Activated CD4-positive, alpha-beta T cell treated with anti-CD3 and anti-CD28 coated beads, Interleukin-2, amount 10 ng/mL, durations not matched to agents 24 days and 14 days (primary cell): ENCODE measurements at regions of chr1 and their contacts with region 1.

Region 1: GRCh38 chr1:27392096-27392777 is at the start of gene GPR3:
- DNase-seq: peak; percentile 98
- H3K4me3 Mint-ChIP-seq: peak within 1 kb of the TSS; percentile 87
- H3K27ac Mint-ChIP-seq: peak within 1 kb of the TSS; percentile 93
- H3K4me1 Mint-ChIP-seq: peaks cover 13% of the 10 kb centered on the region
- H3K27me3 Mint-ChIP-seq: peaks cover 12% of the 10 kb centered on the region
- total RNA-seq, gene GPR3: 3.3 TPM in 2 replicates

Region 2: GRCh38 chr1:27300341-27301051 is 91.7 kb before region 1 on chr1:
- intact Hi-C with region 1: loop called (anchors 1 kb)
- DNase-seq: peak; percentile 92
- H3K4me3 Mint-ChIP-seq: no peak overlapping the region
- H3K27ac Mint-ChIP-seq: no peak overlapping the region
- H3K4me1 Mint-ChIP-seq: no peaks in the 10 kb centered on the region
- H3K27me3 Mint-ChIP-seq: no peaks in the 10 kb centered on the region

Region 3: DNA sequence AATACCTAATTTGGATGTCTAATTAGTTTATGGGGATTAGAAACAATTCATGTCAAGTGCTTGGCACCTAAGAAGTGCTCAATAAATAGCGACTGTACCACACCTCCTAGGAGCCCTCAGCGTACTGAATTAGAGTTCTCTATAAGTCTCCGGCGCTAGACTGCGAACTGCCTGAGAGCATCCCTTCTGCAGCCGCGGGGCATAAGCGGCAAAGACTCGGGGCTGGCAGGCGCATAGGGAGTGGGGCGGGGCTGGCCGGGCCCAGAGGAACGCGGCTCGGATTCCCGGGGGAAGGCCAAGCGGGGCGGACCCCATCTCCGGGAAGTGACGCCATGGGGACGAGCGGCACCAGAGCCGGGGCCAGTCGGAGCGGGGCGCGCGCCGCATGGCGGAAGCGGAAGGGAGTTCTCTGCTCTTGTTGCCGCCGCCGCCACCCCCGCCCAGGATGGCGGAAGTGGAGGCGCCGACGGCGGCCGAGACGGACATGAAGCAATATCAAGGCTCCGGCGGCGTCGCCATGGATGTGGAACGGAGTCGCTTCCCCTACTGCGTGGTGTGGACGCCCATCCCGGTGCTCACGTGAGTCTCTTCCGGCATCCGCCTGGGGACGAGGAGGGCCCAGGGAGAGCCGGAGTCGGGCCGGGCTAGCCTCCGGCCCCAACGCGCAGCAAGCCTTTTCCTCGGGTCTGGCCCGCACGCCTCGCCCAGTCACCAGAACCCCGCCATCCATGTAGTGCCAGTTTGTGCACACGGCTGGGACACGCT is 70.2 kb before region 1 on chr1 and contains the start of gene TMEM222:
- intact Hi-C with region 1: loop called (anchors 1 kb)
- DNase-seq: peak; percentile 99
- H3K4me3 Mint-ChIP-seq: peak within 1 kb of the TSS; percentile 97
- H3K27ac Mint-ChIP-seq: peak within 1 kb of the TSS; percentile 93
- H3K4me1 Mint-ChIP-seq: peaks cover 29% of the 10 kb centered on the region
- H3K27me3 Mint-ChIP-seq: peaks cover 5% of the 10 kb centered on the region
- total RNA-seq, gene TMEM222: 39.6 and 41.4 TPM in 2 replicates

Region 4: GRCh38 chr1:27332536-27333281 is 59.5 kb before region 1 on chr1:
- intact Hi-C with region 1: loop called (anchors 2 kb)
- DNase-seq: peak; percentile 85
- H3K4me3 Mint-ChIP-seq: no peak overlapping the region
- H3K27ac Mint-ChIP-seq: peak overlapping the region; percentile 60
- H3K4me1 Mint-ChIP-seq: peaks cover 28% of the 10 kb centered on the region
- H3K27me3 Mint-ChIP-seq: no peaks in the 10 kb centered on the region

Region 5: GRCh38 chr1:27346991-27347627 is 45.1 kb before region 1 on chr1:
- intact Hi-C with region 1: no loop called
- DNase-seq: no peak
- H3K4me3 Mint-ChIP-seq: no peak overlapping the region
- H3K27ac Mint-ChIP-seq: no peak overlapping the region
- H3K4me1 Mint-ChIP-seq: peaks cover 32% of the 10 kb centered on the region
- H3K27me3 Mint-ChIP-seq: no peaks in the 10 kb centered on the region

Region 6: GRCh38 chr1:27357281-27358037 is 34.8 kb before region 1 on chr1:
- intact Hi-C with region 1: loop called (anchors 1 kb)
- DNase-seq: peak; percentile 95
- H3K4me3 Mint-ChIP-seq: peak overlapping the region; percentile 72
- H3K27ac Mint-ChIP-seq: peak overlapping the region; percentile 81
- H3K4me1 Mint-ChIP-seq: peaks cover 29% of the 10 kb centered on the region
- H3K27me3 Mint-ChIP-seq: no peaks in the 10 kb centered on the region

Region 7: DNA sequence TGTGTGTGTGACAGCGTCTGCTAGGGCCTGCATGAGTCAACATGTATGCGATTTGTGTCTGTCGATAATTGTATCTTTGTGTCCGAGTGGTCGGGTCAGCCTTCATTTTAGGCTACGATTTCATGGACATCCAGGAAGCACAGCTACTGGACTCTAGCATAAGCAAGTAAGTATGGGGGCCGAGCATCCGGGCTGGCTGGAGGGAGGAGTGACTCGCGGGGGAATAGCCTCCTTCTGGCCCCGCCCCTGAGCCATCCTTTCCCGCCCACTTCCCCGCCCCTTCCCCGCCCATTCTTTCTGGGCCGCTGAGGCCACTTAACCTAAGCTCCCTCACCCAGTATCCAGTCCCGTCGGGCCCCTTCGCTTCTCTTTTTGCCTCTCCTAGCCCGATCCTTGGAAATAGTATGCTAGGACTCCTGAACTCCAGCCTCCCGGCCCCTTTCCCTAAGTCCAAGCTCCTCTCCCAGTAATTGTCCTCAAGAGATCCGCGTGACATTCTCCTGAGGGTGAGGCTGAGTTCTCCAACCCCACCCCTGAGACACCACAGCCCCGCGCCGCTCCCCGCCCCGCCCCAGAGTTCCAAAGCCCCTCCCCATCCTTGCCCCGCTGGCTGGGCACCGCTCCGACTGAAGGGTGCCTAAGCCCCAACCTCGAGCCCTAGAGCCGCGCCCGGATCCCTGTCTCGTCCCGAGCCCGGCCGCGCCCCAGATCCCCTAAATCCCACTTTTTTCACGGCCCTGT is 26.7 kb before region 1 on chr1:
- intact Hi-C with region 1: loop called (anchors 1 kb)
- DNase-seq: peak; percentile 90
- H3K4me3 Mint-ChIP-seq: peak overlapping the region; percentile 92
- H3K27ac Mint-ChIP-seq: peak overlapping the region; percentile 90
- H3K4me1 Mint-ChIP-seq: peaks cover 38% of the 10 kb centered on the region
- H3K27me3 Mint-ChIP-seq: no peaks in the 10 kb centered on the region

Region 8: GRCh38 chr1:27556781-27557595 is 164.8 kb after region 1 on chr1:
- intact Hi-C with region 1: no loop called
- DNase-seq: peak; percentile 92
- H3K4me3 Mint-ChIP-seq: peak overlapping the region; percentile 59
- H3K27ac Mint-ChIP-seq: peak overlapping the region; percentile 81
- H3K4me1 Mint-ChIP-seq: peaks cover 47% of the 10 kb centered on the region
- H3K27me3 Mint-ChIP-seq: no peaks in the 10 kb centered on the region

Region 9: DNA sequence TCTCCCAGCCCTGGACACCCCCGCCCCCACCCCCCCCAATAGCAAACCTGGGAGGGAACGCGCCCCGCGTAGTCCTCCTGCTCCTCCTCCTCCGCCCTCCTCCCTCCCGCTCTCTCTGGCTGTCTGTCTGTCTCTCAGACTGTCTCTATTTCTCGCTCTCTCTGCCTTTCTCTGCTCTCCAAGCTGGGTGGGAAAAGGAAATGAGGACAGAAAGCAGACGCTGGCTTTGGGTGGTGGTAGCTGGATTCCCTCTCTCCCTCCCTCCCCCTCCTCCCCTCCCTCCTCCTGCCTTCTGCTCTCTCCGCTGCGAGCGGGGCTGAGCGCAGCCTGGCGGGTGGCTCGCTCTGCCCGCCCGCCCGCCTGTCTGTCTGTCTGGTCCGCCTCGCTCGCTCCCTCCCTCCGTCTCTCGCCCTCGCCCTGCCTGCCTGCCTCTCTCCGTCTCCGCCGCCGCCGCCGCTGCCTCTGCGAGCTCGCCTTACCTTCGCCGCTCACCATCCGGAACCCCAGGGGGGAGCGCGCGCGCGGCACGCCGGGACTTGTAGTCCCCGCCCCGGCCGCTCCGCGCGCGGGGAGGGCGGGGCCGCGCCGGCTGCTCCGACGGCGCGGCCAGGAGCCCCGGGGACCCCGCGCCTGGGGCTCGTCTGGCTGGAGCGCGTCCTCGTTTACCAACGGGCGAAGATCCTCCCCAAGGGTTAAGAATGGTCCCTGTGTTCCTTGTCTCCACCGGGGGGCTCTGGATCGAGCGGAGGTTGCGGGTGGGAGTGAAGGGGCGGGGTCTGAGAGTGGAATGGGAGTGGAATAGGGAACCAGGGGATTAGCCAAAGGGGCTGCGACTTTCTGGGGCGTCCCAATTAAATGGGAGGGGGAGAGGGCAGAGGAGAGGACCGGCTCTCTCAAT is 211.7 kb after region 1 on chr1 and contains the start of gene AHDC1:
- intact Hi-C with region 1: loop called (anchors 1 kb)
- DNase-seq: peak; percentile 98
- H3K4me3 Mint-ChIP-seq: peak within 1 kb of the TSS; percentile 99
- H3K27ac Mint-ChIP-seq: peak within 1 kb of the TSS; percentile 92
- H3K4me1 Mint-ChIP-seq: peaks cover 43% of the 10 kb centered on the region
- H3K27me3 Mint-ChIP-seq: no peaks in the 10 kb centered on the region
- total RNA-seq, gene AHDC1: 33.9 and 34.7 TPM in 2 replicates